Cardiac septum (tissue), 1 donor: ENCODE measurements at regions of chr3 and their contacts with region 1.

Region 1: GRCh38 chr3:13895155-13896105 is 15.6 kb upstream of the WNT7A start:
- DNase-seq: peak; percentile 96

Region 2: DNA sequence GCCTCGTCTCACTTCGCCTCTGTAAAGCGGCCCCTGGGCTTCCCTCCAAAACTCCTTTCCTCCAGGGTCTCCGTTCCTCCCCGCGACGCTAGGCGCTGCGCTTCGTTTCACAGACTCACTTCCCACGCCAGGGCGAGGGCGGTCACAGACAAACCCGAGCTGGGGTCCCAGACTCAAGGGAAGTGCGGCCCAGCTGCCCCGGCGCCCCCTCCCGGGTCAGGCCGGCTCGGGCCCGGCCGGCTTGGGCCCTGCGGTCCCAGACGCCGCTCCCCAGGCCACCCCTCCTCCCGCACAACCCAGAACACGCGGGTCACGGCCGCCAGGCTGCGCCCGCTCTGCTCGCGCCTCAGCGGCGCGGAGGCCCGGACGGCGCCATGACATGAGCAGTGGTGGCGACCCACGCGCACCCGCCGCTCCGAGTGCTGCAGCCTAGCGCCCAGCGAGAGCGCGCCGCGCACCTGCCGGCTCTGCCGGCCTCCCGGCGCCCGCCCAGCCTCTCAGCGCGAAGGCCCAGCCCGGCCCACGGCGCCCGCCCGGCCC is 475.9 kb before region 1 on chr3:
- intact Hi-C with region 1: no loop called
- DNase-seq: peak; percentile 84

Region 3: GRCh38 chr3:14113965-14114635 is 218.7 kb after region 1 on chr3:
- intact Hi-C with region 1: loop called (anchors 2 kb)
- DNase-seq: no peak

Region 4: GRCh38 chr3:14461748-14462324 is 566.4 kb after region 1 on chr3:
- intact Hi-C with region 1: loop called (anchors 10 kb)
- DNase-seq: no peak